ENCODE measurements at regions of chr5 and their contacts with region 1.

Region 1: DNA sequence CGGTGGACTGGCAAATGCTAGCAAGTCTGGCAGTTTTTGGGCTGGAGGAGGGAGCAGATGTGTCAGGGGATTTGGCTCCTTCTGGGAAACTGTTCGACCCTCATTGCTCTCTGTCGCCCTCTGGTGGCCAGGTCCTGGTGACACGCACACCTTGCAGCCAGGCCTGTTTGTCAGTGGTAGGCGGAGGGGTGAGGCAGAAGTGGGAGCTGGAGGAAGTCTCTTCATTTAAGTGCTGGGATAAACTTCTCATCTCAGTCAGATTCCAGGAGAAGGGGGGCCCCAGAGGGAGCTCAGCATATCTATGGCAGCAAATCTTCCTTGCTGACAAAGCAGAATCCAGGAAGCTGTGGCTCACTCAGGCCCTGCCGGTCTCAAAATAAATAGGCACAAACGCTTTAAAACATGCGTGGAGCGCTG is 326.5 kb downstream of the ZSWIM6 start:
- DNase-seq: peak; percentile 82 to 98
- H3K4me3 ChIP-seq: peak overlapping the region in 1 of 4 experiments; percentile 34; a peak in 1 of 8 replicates
- H3K27ac ChIP-seq: no peak overlapping the region
- H3K4me1 ChIP-seq: peaks cover 3 to 8% (median 5%) of the 10 kb centered on the region in 4 experiments
- H3K27me3 ChIP-seq: peaks cover 0 to 2% (median 0%) of the 10 kb centered on the region in 4 experiments; a peak in 1 of 7 replicates
- CTCF ChIP-seq: peak; percentile 88 to 99 (median 98)
- EP300 ChIP-seq: 0 out of 3 replicates have a peak, but pooled peaks of 1 of the 2 experiments have one; percentile 11
- POLR2A ChIP-seq: no peak
- RAD21 ChIP-seq: peak; percentile 88

Region 2: DNA sequence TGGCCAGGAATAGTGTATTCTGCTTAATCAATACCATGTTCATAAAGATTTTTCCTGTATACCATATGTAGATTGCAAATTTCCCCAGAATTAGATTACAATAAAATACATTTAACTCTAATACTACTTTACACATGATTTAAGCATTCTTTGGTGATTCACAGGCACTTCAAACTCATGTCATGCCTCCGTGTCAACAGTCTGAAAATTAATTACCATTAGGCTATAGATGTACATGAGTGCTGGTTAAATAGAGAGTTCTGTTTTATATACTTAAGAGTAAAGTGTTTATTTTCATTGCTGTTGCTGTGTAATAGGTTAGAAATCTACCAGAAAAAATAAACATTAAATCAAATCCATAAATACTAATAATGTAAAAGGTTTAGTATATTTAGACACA is 166.7 kb before region 1 on chr5:
- CTCF ChIA-PET with region 1: no interaction called
- POLR2A ChIA-PET with region 1: no interaction called
- DNase-seq: no peak
- H3K4me3 ChIP-seq: no peak overlapping the region
- H3K27ac ChIP-seq: no peak overlapping the region
- H3K4me1 ChIP-seq: peaks cover 0 to 2% (median 0%) of the 10 kb centered on the region in 4 experiments; a peak in 1 of 7 replicates
- H3K27me3 ChIP-seq: no peaks in the 10 kb centered on the region
- CTCF ChIP-seq: no peak
- EP300 ChIP-seq: no peak
- POLR2A ChIP-seq: no peak
- RAD21 ChIP-seq: no peak

Region 3: GRCh38 chr5:61587125-61587524 is 71.5 kb before region 1 on chr5:
- CTCF ChIA-PET with region 1: no interaction called
- POLR2A ChIA-PET with region 1: no interaction called
- DNase-seq: no peak
- H3K4me3 ChIP-seq: no peak overlapping the region
- H3K27ac ChIP-seq: no peak overlapping the region
- H3K4me1 ChIP-seq: no peaks in the 10 kb centered on the region
- H3K27me3 ChIP-seq: no peaks in the 10 kb centered on the region
- CTCF ChIP-seq: no peak
- EP300 ChIP-seq: no peak
- POLR2A ChIP-seq: no peak
- RAD21 ChIP-seq: no peak

Region 4: DNA sequence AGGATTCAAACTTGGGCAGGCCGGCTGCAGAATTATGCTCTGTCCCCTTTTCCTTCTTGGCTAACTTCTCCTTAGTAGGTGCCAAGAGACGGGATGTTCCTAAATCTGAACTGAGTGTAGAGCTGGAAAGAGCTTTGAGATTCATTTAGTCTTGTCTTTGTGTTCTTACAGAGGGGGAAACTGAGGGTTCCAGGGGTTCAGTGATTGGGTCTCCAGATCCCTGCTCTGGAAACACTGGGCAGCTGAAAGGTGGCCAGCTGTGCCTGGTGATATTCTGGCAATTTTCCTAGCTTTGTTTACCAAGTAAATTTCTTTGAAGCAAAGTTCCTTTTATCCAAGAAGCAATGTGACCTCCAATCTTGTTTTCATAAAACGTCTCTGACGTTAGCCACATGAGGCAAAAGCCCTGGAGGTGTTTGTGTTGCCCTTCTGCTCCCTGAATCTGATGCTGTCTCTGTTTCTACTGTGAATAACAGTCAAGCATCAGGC is 37.9 kb before region 1 on chr5:
- CTCF ChIA-PET with region 1: interaction called, 14 read pairs
- POLR2A ChIA-PET with region 1: no interaction called
- DNase-seq: no peak
- H3K4me3 ChIP-seq: no peak overlapping the region
- H3K27ac ChIP-seq: no peak overlapping the region
- H3K4me1 ChIP-seq: peaks cover 0 to 7% (median 4%) of the 10 kb centered on the region in 4 experiments; a peak in 4 of 7 replicates
- H3K27me3 ChIP-seq: no peaks in the 10 kb centered on the region; a peak in 1 of 7 replicates
- CTCF ChIP-seq: no peak
- EP300 ChIP-seq: no peak
- POLR2A ChIP-seq: no peak
- RAD21 ChIP-seq: no peak

Region 5: GRCh38 chr5:61625681-61626621 is 32.6 kb before region 1 on chr5:
- CTCF ChIA-PET with region 1: interaction called, 14 read pairs
- POLR2A ChIA-PET with region 1: no interaction called
- DNase-seq: peak; percentile 29 to 83
- H3K4me3 ChIP-seq: peak overlapping the region; percentile 35 to 69 (median 46)
- H3K27ac ChIP-seq: no peak overlapping the region; the same call in 1 of the 2 replicates
- H3K4me1 ChIP-seq: peaks cover 4 to 7% (median 6%) of the 10 kb centered on the region in 4 experiments; a peak in 6 of 7 replicates
- H3K27me3 ChIP-seq: no peaks in the 10 kb centered on the region; a peak in 1 of 7 replicates
- CTCF ChIP-seq: no peak
- EP300 ChIP-seq: no peak
- POLR2A ChIP-seq: peak; percentile 37 to 57; a peak in 2 of 3 replicates
- RAD21 ChIP-seq: no peak

Region 6: DNA sequence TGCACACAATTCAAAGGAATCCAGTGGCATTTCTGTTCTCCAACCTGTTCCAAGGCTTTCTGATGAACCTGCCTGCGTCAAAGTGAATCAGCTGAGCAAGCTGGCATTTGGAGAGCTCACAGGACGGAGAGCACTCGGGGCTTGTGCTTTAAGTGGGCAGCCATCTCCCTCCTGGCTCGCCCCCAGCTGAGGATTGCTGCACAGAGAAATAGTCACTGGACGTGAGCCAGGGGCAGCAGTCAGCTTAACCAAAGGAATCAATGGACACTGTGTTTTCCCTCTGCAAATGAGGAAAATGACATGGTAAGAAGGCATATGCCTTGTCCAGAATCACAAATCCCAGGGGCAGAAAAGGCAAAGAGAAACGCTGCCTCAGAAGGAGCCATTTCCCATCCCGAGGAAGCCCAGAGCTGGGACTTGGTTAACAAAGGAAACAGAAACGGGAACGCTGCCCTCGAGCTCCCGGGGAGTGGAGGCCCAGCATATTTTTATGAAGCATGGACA is 27.1 kb before region 1 on chr5:
- CTCF ChIA-PET with region 1: interaction called, 11 read pairs
- POLR2A ChIA-PET with region 1: no interaction called
- DNase-seq: no peak
- H3K4me3 ChIP-seq: no peak overlapping the region
- H3K27ac ChIP-seq: no peak overlapping the region
- H3K4me1 ChIP-seq: peaks cover 0 to 5% (median 4%) of the 10 kb centered on the region in 4 experiments; a peak in 5 of 7 replicates
- H3K27me3 ChIP-seq: no peaks in the 10 kb centered on the region
- CTCF ChIP-seq: no peak
- EP300 ChIP-seq: no peak
- POLR2A ChIP-seq: no peak
- RAD21 ChIP-seq: no peak

Region 7: DNA sequence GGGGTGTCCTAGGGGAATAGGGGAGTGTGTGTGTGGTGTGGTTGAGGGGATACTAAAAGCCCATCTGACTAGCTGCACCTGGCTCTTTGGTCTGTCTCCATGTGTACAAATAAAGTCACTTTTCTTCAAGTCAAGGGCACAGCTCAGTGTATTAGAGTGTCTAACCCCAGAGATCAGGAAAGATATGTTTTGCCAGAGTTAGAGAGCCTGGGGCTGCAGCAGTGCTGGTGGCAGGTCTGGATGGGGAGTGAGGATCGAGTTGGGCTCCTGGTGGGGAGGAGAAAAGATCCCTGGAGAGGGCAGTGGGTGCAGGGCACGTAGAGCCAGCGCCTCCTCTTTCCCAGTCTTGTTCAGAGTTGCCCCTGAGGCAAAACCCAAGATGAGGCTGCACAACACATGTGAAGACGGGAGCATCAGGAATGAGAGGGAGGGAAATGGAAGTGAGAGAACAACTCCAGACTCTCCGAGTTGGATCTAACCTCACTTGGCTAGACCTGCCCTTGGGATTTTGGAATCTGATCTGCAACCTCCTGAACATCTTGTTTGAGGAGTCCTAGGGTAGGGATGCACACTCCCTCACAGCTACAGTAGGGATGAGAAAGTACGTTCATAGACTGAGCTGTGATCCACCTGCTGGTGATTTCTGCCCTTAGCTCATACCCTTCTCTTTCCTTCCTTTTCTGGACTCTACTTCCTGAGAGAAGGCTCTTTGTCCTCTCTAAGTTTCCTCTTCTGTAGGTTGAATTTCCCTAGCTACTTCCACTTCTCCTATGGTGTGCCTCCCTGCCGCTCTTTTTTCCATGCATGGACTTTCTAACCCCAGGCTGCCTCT is 16.6 kb before region 1 on chr5:
- CTCF ChIA-PET with region 1: interaction called, 15 read pairs
- POLR2A ChIA-PET with region 1: no interaction called
- DNase-seq: no peak
- H3K4me3 ChIP-seq: no peak overlapping the region
- H3K27ac ChIP-seq: no peak overlapping the region
- H3K4me1 ChIP-seq: peaks cover 0 to 5% (median under 1%) of the 10 kb centered on the region in 4 experiments; a peak in 1 of 7 replicates
- H3K27me3 ChIP-seq: no peaks in the 10 kb centered on the region
- CTCF ChIP-seq: peak in 1 of 3 experiments; percentile 19; a peak in 1 of 4 replicates
- EP300 ChIP-seq: no peak
- POLR2A ChIP-seq: no peak
- RAD21 ChIP-seq: peak; percentile 28 to 39

Region 8: DNA sequence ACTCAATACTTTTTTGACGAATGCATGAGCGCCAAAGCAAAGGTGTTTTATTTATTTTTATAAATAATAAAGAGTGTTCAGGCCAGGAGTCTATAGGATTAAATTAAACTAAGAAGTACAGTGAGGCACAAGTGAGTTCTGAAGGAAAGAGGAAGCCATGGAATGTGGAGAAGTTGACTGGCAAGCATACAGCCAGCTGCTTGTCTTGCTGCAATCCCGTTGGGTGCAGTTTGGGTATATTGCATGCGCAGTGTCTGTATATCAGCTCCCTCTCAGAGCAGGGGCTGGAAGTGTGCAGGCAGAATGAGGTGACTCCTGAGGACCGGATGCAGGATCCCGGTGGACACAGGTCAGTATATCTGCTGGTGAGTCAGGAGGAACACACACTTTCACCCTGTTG is 10.9 kb before region 1 on chr5:
- CTCF ChIA-PET with region 1: interaction called, 15 read pairs
- POLR2A ChIA-PET with region 1: no interaction called
- DNase-seq: no peak
- H3K4me3 ChIP-seq: no peak overlapping the region
- H3K27ac ChIP-seq: no peak overlapping the region
- H3K4me1 ChIP-seq: no peaks in the 10 kb centered on the region
- H3K27me3 ChIP-seq: peaks cover 0 to 2% (median 0%) of the 10 kb centered on the region in 4 experiments; a peak in 1 of 7 replicates
- CTCF ChIP-seq: no peak
- EP300 ChIP-seq: no peak
- POLR2A ChIP-seq: no peak
- RAD21 ChIP-seq: no peak

Region 9: GRCh38 chr5:61675015-61675692 is 16.6 kb after region 1 on chr5:
- CTCF ChIA-PET with region 1: interaction called, 51 read pairs
- POLR2A ChIA-PET with region 1: no interaction called
- DNase-seq: no peak
- H3K4me3 ChIP-seq: no peak overlapping the region
- H3K27ac ChIP-seq: no peak overlapping the region
- H3K4me1 ChIP-seq: peaks cover 0 to 2% (median 0%) of the 10 kb centered on the region in 4 experiments; a peak in 4 of 7 replicates
- H3K27me3 ChIP-seq: no peaks in the 10 kb centered on the region
- CTCF ChIP-seq: peak in 2 of 3 experiments; percentile 25 to 41; a peak in 2 of 4 replicates
- EP300 ChIP-seq: no peak
- POLR2A ChIP-seq: no peak
- RAD21 ChIP-seq: peak; percentile 37 to 42

Region 10: DNA sequence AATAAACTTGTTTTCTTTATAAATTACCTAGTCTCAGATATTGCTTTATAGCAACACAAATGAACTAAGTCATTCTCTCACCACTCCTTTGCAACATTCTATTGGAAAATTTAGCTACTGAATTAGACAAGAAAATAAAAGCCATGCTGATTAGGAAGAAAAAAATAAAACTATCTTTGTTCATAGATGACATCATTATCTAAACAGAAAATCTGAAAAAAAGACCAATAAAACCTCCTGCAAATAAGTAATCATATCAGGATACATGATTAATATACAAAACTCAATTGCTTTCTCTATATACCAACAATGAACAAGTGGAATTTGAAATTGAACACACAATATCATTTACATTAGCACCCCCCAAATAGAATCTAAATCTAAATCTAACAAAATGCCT is 192.1 kb after region 1 on chr5:
- CTCF ChIA-PET with region 1: no interaction called
- POLR2A ChIA-PET with region 1: no interaction called
- DNase-seq: no peak
- H3K4me3 ChIP-seq: no peak overlapping the region
- H3K27ac ChIP-seq: no peak overlapping the region
- H3K4me1 ChIP-seq: no peaks in the 10 kb centered on the region
- H3K27me3 ChIP-seq: no peaks in the 10 kb centered on the region
- CTCF ChIP-seq: no peak
- EP300 ChIP-seq: no peak
- POLR2A ChIP-seq: no peak
- RAD21 ChIP-seq: no peak